CD4-positive, alpha-beta T cell (primary cell): ENCODE measurements at regions of chr3 and their contacts with region 1.

Region 1: DNA sequence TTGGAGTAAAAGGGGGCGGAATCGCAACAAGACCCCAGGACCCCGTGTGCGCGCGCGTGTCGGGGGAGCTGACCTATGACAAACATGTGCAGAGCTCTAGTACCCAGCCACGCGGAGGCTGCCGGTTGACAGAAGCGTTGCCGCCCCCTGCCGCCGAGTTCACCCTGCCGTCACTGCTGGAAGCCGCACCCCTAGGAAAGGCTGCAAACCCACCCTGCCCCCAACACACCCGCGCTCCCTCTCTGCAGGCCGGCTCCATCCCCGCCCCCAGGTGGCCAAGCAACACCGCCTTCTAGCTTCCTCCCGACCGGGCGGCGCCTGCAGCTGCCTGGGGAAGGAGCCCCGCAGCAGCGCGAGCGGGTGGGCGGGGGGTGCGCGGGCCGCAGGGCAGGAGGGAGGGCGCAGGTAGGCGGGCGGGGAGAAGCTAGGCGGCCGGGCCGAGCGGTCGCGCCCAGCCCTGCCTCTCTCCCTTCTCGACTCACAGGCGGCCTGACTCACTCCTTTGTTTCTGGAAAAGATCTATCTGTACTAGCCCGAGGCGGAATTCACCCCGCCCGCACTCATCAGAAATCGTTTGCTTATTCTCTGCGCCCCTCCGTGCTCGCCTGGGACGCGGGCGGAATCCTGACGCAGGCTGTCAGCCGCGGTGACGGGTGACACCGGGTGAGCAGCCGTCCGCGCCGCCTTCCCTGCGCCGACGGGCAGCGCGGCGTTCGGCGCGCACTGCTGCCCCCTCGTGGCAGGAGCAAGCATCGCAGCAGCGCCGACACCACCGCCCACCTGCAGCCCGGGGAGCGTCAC is 160.8 kb downstream of the GAP43 start:
- DNase-seq: peak; percentile 82 to 96 (median 90)
- ATAC-seq: peak; percentile 83
- H3K4me3 ChIP-seq: peak overlapping the region; percentile 72
- H3K4me3 Mint-ChIP-seq: peak overlapping the region; percentile 80
- H3K27ac ChIP-seq: peak overlapping the region; percentile 94
- H3K27ac Mint-ChIP-seq: peak overlapping the region; percentile 79
- H3K4me1 ChIP-seq: peaks cover 16% of the 10 kb centered on the region
- H3K4me1 Mint-ChIP-seq: peaks cover 10% of the 10 kb centered on the region
- H3K27me3 ChIP-seq: no peaks in the 10 kb centered on the region
- H3K27me3 Mint-ChIP-seq: no peaks in the 10 kb centered on the region
- CTCF ChIP-seq: peak; percentile 99

Region 2: GRCh38 chr3:114056130-114057010 is 1727.8 kb before region 1 on chr3 and contains the starts of genes CCDC191 and QTRT2:
- CTCF ChIA-PET with region 1: no interaction called
- POLR2A ChIA-PET with region 1: no interaction called
- intact Hi-C with region 1: loop called in 1 of 2 experiments (anchors 5 kb)
- DNase-seq: peak; percentile 93 to 100 (median 97)
- ATAC-seq: peak; percentile 95
- H3K4me3 ChIP-seq: peak within 1 kb of the TSS; percentile 88
- H3K4me3 Mint-ChIP-seq: peak within 1 kb of the TSS; percentile 95
- H3K27ac ChIP-seq: peak within 1 kb of the TSS; percentile 87 to 96
- H3K27ac Mint-ChIP-seq: peak within 1 kb of the TSS; percentile 94
- H3K4me1 ChIP-seq: peaks cover 18% of the 10 kb centered on the region
- H3K4me1 Mint-ChIP-seq: peaks cover 53% of the 10 kb centered on the region
- H3K27me3 ChIP-seq: no peaks in the 10 kb centered on the region
- H3K27me3 Mint-ChIP-seq: no peaks in the 10 kb centered on the region
- CTCF ChIP-seq: no peak
- total RNA-seq, gene CCDC191: 3.6 to 3.7 TPM
- total RNA-seq, gene QTRT2: 22.8 to 27.0 TPM

Region 3: GRCh38 chr3:115099986-115100571 is 684.1 kb before region 1 on chr3:
- CTCF ChIA-PET with region 1: interaction called, 6 read pairs
- POLR2A ChIA-PET with region 1: interaction called, 16 read pairs
- intact Hi-C with region 1: loop called in 1 of 2 experiments (anchors 5 kb)
- DNase-seq: peak in 9 of 14 experiments; percentile 3 to 82 (median 28)
- ATAC-seq: peak; percentile 87
- H3K4me3 ChIP-seq: peak overlapping the region; percentile 46
- H3K4me3 Mint-ChIP-seq: peak overlapping the region; percentile 89
- H3K27ac ChIP-seq: peak overlapping the region in 1 of 2 donors; percentile 3
- H3K27ac Mint-ChIP-seq: peak overlapping the region; percentile 86
- H3K4me1 ChIP-seq: peaks cover 2% of the 10 kb centered on the region
- H3K4me1 Mint-ChIP-seq: peaks cover 66% of the 10 kb centered on the region
- H3K27me3 ChIP-seq: no peaks in the 10 kb centered on the region
- H3K27me3 Mint-ChIP-seq: no peaks in the 10 kb centered on the region
- CTCF ChIP-seq: no peak

Region 4: GRCh38 chr3:115169808-115170207 is 614.3 kb before region 1 on chr3:
- CTCF ChIA-PET with region 1: interaction called, 12 read pairs
- POLR2A ChIA-PET with region 1: interaction called, 17 read pairs
- intact Hi-C with region 1: loop called in 1 of 2 experiments (anchors 5 kb)
- DNase-seq: peak in 2 of 14 experiments; percentile 29 to 41
- ATAC-seq: no peak
- H3K4me3 ChIP-seq: no peak overlapping the region
- H3K4me3 Mint-ChIP-seq: no peak overlapping the region
- H3K27ac ChIP-seq: no peak overlapping the region
- H3K27ac Mint-ChIP-seq: no peak overlapping the region
- H3K4me1 ChIP-seq: peaks cover 11% of the 10 kb centered on the region
- H3K4me1 Mint-ChIP-seq: peaks cover 13% of the 10 kb centered on the region
- H3K27me3 ChIP-seq: no peaks in the 10 kb centered on the region
- H3K27me3 Mint-ChIP-seq: no peaks in the 10 kb centered on the region
- CTCF ChIP-seq: peak; percentile 73

Region 5: DNA sequence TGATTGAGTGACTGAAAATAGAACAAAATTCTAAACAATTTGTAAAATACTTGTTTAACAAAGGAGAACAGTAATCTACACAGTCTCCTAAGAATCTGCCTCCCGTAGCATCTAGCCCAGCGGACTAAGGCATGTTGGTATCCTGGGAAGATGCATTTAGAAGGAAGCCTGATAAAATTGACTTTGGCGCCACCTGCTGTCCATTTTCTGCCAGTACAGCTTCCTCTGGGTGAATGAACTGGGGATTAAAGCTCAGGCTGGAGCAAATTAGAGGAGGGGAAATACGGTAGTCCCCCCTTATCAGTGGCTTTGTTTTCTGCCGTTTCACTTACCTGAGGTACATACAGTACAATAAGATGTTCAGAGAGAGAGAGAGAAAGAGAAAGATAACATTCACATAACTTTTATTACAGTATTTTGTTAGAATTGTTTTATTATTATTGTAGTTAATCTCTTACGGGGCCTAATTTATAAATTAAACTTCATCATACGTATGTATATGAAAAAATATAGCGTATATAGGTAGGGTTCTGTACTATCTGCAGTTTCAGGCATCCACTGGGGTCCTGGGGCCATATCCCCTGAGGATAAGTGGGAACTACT is 30.7 kb after region 1 on chr3:
- CTCF ChIA-PET with region 1: interaction called, 16 read pairs
- POLR2A ChIA-PET with region 1: interaction called, 7 read pairs
- intact Hi-C with region 1: loop called (anchors 2 to 5 kb)
- DNase-seq: peak; percentile 39 to 81 (median 60)
- ATAC-seq: peak; percentile 64
- H3K4me3 ChIP-seq: no peak overlapping the region
- H3K4me3 Mint-ChIP-seq: no peak overlapping the region
- H3K27ac ChIP-seq: no peak overlapping the region
- H3K27ac Mint-ChIP-seq: no peak overlapping the region
- H3K4me1 ChIP-seq: no peaks in the 10 kb centered on the region
- H3K4me1 Mint-ChIP-seq: no peaks in the 10 kb centered on the region
- H3K27me3 ChIP-seq: peaks cover 0 to 7% of the 10 kb centered on the region in 2 experiments
- H3K27me3 Mint-ChIP-seq: peaks cover 21% of the 10 kb centered on the region
- CTCF ChIP-seq: peak; percentile 95

Region 6: DNA sequence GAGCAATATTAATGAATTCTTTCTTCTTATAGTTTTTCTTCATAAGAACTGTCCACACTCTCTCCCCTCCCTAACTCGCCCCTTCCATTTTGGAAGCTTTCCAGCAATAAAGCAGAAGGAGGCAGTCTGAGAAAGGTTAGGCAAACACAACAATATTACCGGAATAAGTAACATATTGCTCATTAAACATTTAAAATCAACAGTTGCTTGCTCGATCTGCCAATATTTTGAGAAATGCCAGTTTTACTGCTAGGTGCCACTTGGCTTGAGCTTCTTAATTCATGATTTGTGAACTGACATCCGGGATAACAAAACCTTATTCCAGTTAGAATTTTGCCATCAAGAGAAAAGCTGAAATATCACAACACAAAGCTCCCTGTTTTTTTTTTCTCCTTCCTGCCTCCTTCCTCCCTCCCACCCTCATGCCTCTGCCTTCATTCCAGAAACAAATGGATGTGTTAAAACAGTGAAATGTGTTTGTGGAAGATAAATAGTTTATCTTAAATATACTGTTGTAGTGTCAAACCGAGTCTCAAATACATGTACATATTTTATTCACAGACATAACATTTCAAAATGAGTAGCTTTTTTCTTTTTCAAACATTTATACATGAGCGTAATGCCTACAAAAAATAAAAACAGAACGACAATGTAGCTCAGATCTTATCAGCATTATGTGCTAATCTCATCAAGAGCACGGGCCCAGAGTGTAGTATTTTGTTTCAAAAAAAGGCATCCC is 92.9 kb after region 1 on chr3:
- CTCF ChIA-PET with region 1: no interaction called
- POLR2A ChIA-PET with region 1: no interaction called
- intact Hi-C with region 1: no loop called
- DNase-seq: no peak
- ATAC-seq: no peak
- H3K4me3 ChIP-seq: no peak overlapping the region
- H3K4me3 Mint-ChIP-seq: no peak overlapping the region
- H3K27ac ChIP-seq: no peak overlapping the region
- H3K27ac Mint-ChIP-seq: no peak overlapping the region
- H3K4me1 ChIP-seq: no peaks in the 10 kb centered on the region
- H3K4me1 Mint-ChIP-seq: no peaks in the 10 kb centered on the region
- H3K27me3 ChIP-seq: peaks cover 0 to under 1% of the 10 kb centered on the region in 2 experiments
- H3K27me3 Mint-ChIP-seq: peaks cover 7% of the 10 kb centered on the region
- CTCF ChIP-seq: no peak